ENCODE measurements at regions of chr12 and their contacts with region 1.

Region 1: DNA sequence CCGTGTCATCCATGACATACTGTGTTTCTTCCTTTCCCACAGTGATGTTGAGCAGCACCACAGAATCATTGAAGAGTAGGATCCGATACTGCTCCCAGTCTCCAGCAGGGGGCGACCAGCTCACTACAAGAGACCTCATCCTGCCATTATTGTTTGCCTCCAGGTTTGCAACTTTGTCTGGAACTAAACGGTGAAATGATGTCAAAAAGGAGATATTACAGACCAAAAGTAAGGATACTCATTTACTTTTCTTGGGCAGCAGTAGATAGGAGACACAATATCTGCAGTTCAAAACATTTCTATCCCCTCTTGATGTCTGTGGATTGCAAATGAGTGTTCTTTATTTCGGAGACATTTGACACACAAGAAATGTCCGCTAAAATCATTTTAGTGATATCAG is 47.2 kb downstream of the PTPRB start:
- DNase-seq: peak; percentile 72
- H3K4me3 Mint-ChIP-seq: no peak overlapping the region
- H3K27ac Mint-ChIP-seq: no peak overlapping the region
- H3K4me1 Mint-ChIP-seq: no peaks in the 10 kb centered on the region
- H3K27me3 Mint-ChIP-seq: peaks cover 31% of the 10 kb centered on the region

Region 2: DNA sequence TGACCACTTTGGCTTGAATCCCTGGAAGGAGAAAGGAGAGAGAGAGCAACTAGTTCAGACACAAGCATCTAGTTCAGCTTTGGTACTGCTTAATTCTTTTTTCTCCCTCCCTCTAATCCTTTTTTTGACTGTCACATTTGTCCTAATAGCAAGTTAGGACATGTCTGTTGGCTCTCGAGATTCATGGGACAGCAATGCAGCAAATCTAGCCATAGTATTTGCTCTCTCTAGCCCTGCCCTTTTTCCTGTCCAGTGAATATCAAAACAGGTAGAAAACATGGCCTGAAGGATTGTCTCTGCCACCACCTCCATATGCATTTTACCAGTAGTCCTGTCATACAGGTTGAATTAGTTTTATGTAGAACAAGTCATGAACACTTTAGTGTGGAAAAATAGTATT is 69.2 kb before region 1 on chr12:
- CTCF ChIA-PET with region 1: no interaction called
- intact Hi-C with region 1: no loop called
- DNase-seq: no peak
- H3K4me3 Mint-ChIP-seq: no peak overlapping the region
- H3K27ac Mint-ChIP-seq: no peak overlapping the region
- H3K4me1 Mint-ChIP-seq: no peaks in the 10 kb centered on the region
- H3K27me3 Mint-ChIP-seq: no peaks in the 10 kb centered on the region

Region 3: GRCh38 chr12:70719672-70720420 is 129.8 kb after region 1 on chr12:
- CTCF ChIA-PET with region 1: interaction called, 3 read pairs
- intact Hi-C with region 1: loop called (anchors 1 kb)
- DNase-seq: peak; percentile 28
- H3K4me3 Mint-ChIP-seq: peak overlapping the region; percentile 45
- H3K27ac Mint-ChIP-seq: no peak overlapping the region
- H3K4me1 Mint-ChIP-seq: peaks cover 6% of the 10 kb centered on the region
- H3K27me3 Mint-ChIP-seq: peaks cover 9% of the 10 kb centered on the region

Region 4: DNA sequence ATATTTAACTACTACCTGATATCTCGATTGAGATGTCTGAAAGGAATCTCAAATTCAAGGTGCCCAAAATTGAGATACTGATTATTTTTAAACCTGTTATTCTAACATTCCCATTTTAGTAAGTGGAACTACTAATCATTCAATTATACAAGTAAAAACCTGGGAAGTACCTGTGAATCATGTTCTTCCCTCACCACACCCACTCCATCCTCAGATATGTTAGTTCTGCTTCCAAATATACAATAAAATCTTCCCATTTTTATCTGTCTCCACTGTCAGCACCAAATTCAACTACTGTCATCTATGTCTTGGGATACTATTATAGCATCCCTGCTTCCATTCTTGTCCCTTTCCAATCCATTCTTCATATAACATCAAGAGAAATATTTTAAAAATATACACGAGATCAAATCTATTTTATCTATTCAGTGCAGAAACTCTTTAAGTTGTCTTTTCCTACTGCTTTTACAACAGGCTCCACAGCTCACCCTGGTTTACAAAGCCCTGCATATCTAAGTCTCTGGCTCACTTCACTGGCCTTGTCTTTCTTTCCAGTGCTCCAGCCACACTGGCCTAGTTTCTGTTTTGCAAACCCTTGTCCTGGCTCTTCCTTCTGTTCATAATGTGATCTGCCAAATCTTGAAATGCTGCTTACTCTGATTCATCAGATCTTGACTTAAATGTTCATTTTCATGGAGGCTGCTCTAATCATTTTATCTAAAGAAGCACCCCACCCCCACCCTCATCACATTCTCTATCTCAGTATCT is 208.1 kb after region 1 on chr12:
- CTCF ChIA-PET with region 1: no interaction called
- intact Hi-C with region 1: no loop called
- DNase-seq: no peak
- H3K4me3 Mint-ChIP-seq: no peak overlapping the region
- H3K27ac Mint-ChIP-seq: no peak overlapping the region
- H3K4me1 Mint-ChIP-seq: no peaks in the 10 kb centered on the region
- H3K27me3 Mint-ChIP-seq: no peaks in the 10 kb centered on the region

Measured in activated naive CD4-positive, alpha-beta T cell treated with anti-CD3 and anti-CD28 coated beads for 36 hours (primary cell).